Posterior cingulate gyrus (tissue), 11 donors: ENCODE measurements at regions of chr12 and their contacts with region 1.

Region 1: GRCh38 chr12:52582971-52583456 is 9.4 kb upstream of the KRT74 start:
- DNase-seq: peak in 7 of 10 donors; percentile 18 to 86 (median 56)

Region 2: DNA sequence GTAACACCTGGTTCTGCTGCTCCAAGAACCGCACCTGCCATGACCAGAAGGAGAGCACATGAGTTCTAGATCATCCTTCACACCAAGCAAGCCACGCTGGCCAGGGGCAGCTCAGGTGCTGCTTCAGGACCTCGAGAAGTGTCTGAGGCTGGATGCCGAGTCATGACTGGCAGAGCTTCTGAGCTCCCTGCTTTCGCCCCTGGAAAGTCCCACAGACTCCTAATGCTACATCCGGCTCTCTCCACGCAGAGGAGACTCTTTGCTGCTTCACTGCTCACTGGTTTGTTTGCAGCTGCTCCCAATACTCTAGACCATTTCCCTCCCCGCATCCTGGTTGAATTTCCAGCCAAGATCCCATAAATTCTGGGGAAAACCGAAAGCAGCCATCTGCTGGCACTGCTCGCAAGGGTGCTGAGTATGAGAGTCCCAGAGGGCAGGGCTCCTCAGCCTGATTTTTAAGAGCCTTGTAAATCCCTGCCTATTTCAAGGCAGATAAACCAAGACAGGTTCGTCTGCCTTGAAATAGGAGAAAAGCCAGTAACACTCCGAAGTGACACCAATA is 67.6 kb after region 1 on chr12:
- intact Hi-C with region 1: no loop called
- DNase-seq: peak in 1 of 10 donors; percentile 63

Region 3: DNA sequence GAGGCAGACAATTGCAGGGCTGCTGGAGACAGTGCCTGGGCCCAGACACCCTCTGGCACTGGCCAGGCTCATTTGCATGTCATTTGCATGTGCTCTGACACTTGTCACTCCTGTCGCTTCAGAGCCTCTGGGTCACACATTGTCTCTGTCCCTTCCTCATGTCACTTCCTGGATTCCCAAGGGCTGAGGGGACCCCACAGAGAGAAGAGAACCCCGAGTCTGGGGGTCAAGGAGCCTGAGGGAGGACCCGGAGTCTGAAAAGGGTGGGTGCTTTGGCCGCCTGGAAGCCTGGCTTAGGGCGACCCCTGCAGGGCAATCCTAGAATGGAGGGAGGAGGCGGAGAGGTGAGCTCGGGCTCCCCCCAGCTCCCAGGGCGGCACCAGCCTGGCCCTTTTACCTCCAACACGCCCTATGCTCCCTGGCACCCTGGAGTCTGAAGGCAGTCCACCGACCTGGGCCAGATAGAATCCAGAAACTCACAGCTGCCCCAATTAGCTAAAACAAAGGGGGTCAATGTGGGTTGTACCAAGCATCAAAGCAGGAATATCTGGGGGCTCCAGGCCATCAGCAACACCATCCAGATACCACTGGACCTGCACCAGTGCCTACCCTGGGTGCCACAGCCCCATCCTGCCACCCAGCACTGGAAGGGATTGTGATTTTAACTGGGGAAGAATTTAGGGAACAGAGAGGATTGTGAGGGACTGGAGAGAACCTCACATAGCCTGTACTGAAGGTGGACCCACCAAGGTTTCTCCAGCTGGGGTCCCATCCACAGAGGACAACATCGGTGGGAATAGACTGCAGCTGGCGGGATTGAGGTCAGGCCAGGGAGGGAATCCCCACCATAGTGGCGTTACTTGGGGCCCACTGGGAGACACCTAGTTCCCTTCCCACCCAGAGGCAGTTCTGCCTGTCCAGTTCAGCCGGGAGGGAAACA is 287.6 kb after region 1 on chr12:
- intact Hi-C with region 1: loop called (anchors 2 kb)
- DNase-seq: peak in 9 of 10 donors; percentile 27 to 93 (median 66)

Region 4: DNA sequence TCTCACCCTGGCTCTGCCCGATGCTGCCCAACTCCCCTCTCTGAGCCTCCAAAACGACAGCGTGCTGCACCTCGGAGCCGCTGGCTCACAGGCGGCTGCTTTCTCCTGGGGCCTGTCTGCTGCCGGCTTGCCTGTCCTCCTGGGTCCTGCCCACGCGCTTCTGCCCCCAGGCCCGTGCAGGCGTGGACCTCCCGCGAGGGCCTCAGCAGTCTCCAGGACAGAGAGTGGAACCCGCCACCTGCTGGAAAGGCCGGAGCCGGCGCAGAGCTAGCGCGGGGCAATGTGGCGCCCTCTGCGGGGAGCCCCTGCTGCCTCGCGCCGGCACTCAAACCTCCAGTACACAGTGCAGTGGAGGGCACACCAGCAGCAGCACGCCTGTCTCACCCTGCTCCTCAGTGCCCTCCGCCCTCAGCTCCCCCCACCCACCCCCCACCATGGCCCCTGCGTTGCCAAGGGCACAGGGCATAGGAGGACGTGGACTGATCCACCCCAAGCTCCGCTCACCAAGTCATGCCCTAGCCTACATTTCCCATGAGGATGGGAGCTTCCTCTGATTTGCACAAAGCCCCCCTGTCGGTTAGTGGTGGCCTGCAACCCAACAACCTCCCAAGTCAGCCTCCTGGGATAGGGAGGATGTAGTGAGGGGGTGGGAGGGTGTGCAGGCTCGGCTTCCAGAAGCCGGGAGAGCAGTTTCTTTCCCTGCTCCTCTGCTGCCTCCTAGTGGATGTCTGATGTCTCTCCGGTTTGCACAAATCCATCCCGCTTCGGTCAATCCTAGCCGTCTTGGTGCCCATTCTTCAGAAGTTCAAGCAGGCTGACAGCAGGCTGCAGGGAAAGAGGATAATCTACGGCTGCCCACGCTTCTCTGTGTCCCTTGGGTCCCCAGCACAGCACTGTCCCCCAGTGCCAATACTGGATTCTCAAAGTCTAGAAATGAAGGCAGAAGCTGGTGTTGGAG is 296.7 kb after region 1 on chr12:
- intact Hi-C with region 1: loop called (anchors 2 kb)
- DNase-seq: peak; percentile 52 to 95 (median 76)